ENCODE measurements at regions of chr9 and their contacts with region 1.

Region 1: GRCh38 chr9:1140057-1140456 is 89.9 kb downstream of the DMRT2 start:
- DNase-seq: no peak
- H3K4me3 ChIP-seq: no peak overlapping the region
- H3K27ac ChIP-seq: no peak overlapping the region
- H3K4me1 ChIP-seq: no peaks in the 10 kb centered on the region
- H3K27me3 ChIP-seq: no peaks in the 10 kb centered on the region
- CTCF ChIP-seq: no peak

Region 2: GRCh38 chr9:1125741-1126140 is 14.3 kb before region 1 on chr9:
- CTCF ChIA-PET with region 1: no interaction called
- POLR2A ChIA-PET with region 1: no interaction called
- intact Hi-C with region 1: no loop called
- DNase-seq: no peak
- H3K4me3 ChIP-seq: no peak overlapping the region
- H3K27ac ChIP-seq: no peak overlapping the region
- H3K4me1 ChIP-seq: no peaks in the 10 kb centered on the region
- H3K27me3 ChIP-seq: no peaks in the 10 kb centered on the region
- CTCF ChIP-seq: no peak

Region 3: GRCh38 chr9:1179338-1179737 is 39.3 kb after region 1 on chr9:
- CTCF ChIA-PET with region 1: no interaction called
- POLR2A ChIA-PET with region 1: no interaction called
- intact Hi-C with region 1: loop called (anchors 5 kb)
- DNase-seq: no peak
- H3K4me3 ChIP-seq: no peak overlapping the region
- H3K27ac ChIP-seq: no peak overlapping the region
- H3K4me1 ChIP-seq: no peaks in the 10 kb centered on the region
- H3K27me3 ChIP-seq: no peaks in the 10 kb centered on the region
- CTCF ChIP-seq: no peak

Region 4: GRCh38 chr9:1198089-1198488 is 58.0 kb after region 1 on chr9:
- CTCF ChIA-PET with region 1: no interaction called
- POLR2A ChIA-PET with region 1: no interaction called
- intact Hi-C with region 1: no loop called
- DNase-seq: no peak
- H3K4me3 ChIP-seq: no peak overlapping the region
- H3K27ac ChIP-seq: no peak overlapping the region
- H3K4me1 ChIP-seq: no peaks in the 10 kb centered on the region
- H3K27me3 ChIP-seq: no peaks in the 10 kb centered on the region
- CTCF ChIP-seq: no peak

Measured in A673 (cell line).